ENCODE measurements at regions of chr14 and their contacts with region 1.

Region 1: DNA sequence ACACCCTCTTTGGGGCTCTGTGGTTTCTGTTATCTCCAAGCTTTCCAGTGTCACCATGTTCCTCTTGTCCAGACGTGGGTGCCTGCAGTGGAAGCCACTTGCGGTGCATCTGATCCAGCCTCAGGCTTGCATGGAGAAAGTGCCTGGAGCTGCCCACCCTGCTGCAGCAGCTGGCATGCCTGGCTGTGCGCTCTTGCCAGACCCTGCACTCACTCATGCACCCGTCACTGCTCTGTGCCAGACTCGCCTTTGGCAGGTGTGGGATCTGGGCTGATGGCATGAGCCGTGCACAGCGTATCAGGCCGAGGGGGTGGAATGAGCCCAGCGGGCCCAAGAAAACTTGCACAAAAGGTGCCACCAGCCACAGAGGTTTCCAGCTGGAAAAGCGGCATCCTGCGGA is 105.1 kb downstream of the MNAT1 start:
- DNase-seq: no peak
- H3K4me3 ChIP-seq: no peak overlapping the region
- H3K27ac ChIP-seq: no peak overlapping the region
- H3K4me1 ChIP-seq: no peaks in the 10 kb centered on the region
- H3K27me3 ChIP-seq: no peaks in the 10 kb centered on the region
- CTCF ChIP-seq: no peak

Region 2: GRCh38 chr14:60904381-60904780 is 64.7 kb after region 1 on chr14:
- CTCF ChIA-PET with region 1: no interaction called
- dilution Hi-C with region 1: loop called (anchors 5 kb)
- in situ Hi-C with region 1: no loop called
- intact Hi-C with region 1: no loop called
- DNase-seq: no peak
- H3K4me3 ChIP-seq: no peak overlapping the region
- H3K27ac ChIP-seq: no peak overlapping the region
- H3K4me1 ChIP-seq: no peaks in the 10 kb centered on the region
- H3K27me3 ChIP-seq: no peaks in the 10 kb centered on the region
- CTCF ChIP-seq: no peak

Region 3: DNA sequence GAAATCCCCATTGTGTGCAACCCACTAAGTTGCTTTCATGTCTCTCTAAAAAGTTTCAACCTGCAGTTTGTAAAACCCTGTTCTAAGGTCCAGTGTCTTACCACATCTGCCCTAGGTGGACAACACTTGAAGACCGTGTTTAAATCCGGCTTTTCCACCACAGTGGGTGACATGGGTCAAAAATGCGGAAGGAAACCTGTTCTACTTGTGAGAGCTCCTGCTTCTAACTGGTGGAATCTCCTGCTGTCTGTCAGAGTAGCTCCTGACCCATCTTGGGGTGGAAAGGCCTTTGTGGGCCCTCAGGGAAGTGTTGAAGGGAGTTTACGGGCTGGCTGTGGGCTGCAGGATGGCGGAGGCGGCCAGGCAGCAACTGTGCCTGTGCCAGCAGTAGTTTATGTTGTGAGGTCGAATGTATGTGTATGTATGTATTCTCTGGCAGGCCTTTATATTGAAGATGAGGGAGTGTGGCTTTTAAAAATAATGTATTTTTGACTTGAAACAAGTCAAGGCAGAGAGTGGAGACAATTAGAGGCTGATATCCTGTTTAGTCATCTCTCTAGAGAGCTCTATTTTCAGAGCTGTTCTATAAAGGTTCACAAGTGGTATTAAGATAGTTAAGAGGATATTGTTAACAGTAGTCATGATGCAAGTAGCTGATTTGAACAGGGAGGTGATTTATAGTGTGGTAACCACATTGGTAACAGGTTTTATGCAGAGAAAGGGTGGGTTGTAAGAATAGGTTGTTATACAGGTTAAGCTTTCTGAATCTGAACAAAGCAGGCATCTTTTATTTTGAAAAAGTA is 548.7 kb after region 1 on chr14:
- CTCF ChIA-PET with region 1: no interaction called
- dilution Hi-C with region 1: no loop called
- in situ Hi-C with region 1: no loop called
- intact Hi-C with region 1: no loop called
- DNase-seq: peak; percentile 94
- H3K4me3 ChIP-seq: no peak overlapping the region
- H3K27ac ChIP-seq: peak overlapping the region; percentile 94
- H3K4me1 ChIP-seq: peaks cover 25% of the 10 kb centered on the region
- H3K27me3 ChIP-seq: no peaks in the 10 kb centered on the region
- CTCF ChIP-seq: no peak

Measured in mammary epithelial cell (primary cell).